Activated CD8-positive, alpha-beta T cell treated with anti-CD3 and anti-CD28 coated beads, Interleukin-2, amount 10 ng/mL, durations not matched to agents 7 days and 5 days (primary cell): ENCODE measurements at regions of chr12 and their contacts with region 1.

Region 1: DNA sequence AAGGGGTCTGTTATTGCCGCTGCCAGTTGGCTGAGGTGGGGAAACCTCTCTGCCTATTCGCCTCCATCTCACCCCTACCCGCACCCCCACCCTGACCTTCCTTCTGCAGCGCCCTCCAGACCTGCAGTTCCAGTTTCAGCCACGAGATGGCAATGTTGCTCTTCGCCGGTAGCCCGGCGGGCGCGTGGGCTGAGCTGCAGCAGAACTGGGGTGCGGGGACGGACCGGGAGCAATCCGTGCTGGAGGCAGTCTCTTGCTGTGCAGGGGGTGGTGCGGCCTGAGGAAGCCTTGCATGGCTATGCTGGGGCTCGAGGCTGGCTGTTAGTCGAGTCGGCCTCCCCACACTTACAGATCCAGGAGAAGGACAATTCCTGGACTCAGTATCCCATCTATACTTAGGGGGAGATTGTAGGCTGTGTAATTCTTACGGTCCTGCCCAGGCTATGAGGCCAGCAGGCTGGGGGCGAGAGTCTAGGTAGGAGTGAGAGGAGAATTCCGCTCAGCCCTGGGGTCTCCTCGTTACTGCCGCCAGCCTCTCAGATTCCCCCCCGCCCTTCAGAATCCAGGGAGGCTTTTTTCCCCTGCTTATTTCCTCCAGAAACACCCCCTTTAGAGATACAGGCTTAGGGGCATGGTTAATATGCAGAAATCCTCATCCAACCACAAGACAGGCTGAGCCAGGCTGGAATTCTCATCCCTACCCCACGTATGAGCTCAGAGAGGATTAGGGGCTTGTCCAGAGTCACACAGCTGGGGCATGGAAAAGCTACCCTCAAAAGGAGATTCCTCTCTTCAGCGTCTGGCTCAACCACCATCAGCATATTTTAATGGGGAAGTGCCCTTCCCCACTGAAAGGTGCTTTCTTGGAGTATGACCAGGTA is 118.2 kb downstream of the AACS start:
- DNase-seq: peak; percentile 84
- ATAC-seq: peak; percentile 69
- H3K4me3 Mint-ChIP-seq: no peak overlapping the region
- H3K27ac Mint-ChIP-seq: no peak overlapping the region
- H3K4me1 Mint-ChIP-seq: peaks cover 5% of the 10 kb centered on the region
- H3K27me3 Mint-ChIP-seq: peaks cover 43% of the 10 kb centered on the region

Region 2: DNA sequence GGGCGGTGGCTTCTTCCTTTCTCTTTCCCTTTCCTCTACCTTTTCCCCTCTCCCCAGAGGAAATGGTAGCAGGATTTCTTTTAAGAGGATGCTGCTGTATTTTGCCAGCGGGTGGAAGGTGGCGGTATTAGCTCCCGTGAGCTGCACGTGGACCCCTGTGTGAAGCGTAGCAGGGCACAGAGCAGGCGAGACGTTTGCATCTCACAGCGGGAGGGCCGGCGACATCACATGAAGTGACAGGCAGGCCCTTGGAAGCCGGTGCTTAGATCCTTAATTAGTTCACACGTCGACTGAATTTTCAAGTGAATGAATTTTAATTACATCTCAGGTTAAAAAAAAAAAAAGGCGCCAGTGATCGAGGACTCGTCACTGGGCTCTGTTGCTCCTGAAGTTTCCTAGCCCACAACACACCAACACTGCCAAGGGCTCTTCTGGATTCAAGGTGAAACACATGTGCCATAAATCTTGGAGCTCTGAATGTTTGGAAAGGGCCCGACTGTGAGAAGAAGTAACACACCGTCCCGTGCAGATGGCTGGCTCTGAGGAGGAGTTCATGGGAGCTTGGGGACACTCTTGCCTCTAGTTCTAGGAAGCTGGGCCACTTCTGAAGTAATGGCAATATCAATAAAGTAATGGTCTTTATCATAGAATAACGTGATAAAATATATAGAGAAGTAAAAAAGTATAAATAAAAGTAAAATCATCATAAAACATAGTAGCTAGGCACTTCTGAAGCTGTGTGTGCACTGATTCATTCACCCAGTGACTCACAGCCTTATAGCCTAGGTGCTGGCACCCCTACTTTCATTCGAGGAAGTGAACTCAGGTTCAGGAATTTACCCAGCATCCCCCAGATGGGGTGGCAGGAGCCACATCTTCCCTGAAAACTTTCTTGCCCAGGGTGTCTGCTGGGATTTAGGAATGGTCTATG is 42.9 kb before region 1 on chr12:
- CTCF ChIA-PET with region 1: no interaction called
- POLR2A ChIA-PET with region 1: no interaction called
- DNase-seq: no peak
- ATAC-seq: no peak
- H3K4me3 Mint-ChIP-seq: no peak overlapping the region
- H3K27ac Mint-ChIP-seq: no peak overlapping the region
- H3K4me1 Mint-ChIP-seq: no peaks in the 10 kb centered on the region
- H3K27me3 Mint-ChIP-seq: no peaks in the 10 kb centered on the region

Region 3: GRCh38 chr12:125203145-125203765 is 19.8 kb after region 1 on chr12:
- CTCF ChIA-PET with region 1: interaction called, 11 read pairs
- POLR2A ChIA-PET with region 1: no interaction called
- DNase-seq: no peak
- ATAC-seq: no peak
- H3K4me3 Mint-ChIP-seq: no peak overlapping the region
- H3K27ac Mint-ChIP-seq: no peak overlapping the region
- H3K4me1 Mint-ChIP-seq: no peaks in the 10 kb centered on the region
- H3K27me3 Mint-ChIP-seq: peaks cover 4% of the 10 kb centered on the region

Region 4: GRCh38 chr12:125402874-125403789 is 219.7 kb after region 1 on chr12:
- CTCF ChIA-PET with region 1: interaction called, 21 read pairs
- POLR2A ChIA-PET with region 1: no interaction called
- DNase-seq: peak; percentile 29
- ATAC-seq: no peak
- H3K4me3 Mint-ChIP-seq: no peak overlapping the region
- H3K27ac Mint-ChIP-seq: no peak overlapping the region
- H3K4me1 Mint-ChIP-seq: no peaks in the 10 kb centered on the region
- H3K27me3 Mint-ChIP-seq: no peaks in the 10 kb centered on the region